Body of pancreas (tissue), 4 donors: ENCODE measurements at regions of chr18 and their contacts with region 1.

Region 1: GRCh38 chr18:56575819-56576663 is 62.4 kb downstream of the TXNL1 start:
- DNase-seq: peak in 1 of 4 donors; percentile 40
- ATAC-seq: peak; percentile 76
- H3K4me3 ChIP-seq: no peak overlapping the region
- H3K27ac ChIP-seq: no peak overlapping the region
- H3K4me1 ChIP-seq: peaks cover 25% of the 10 kb centered on the region
- H3K27me3 ChIP-seq: no peaks in the 10 kb centered on the region
- CTCF ChIP-seq: peak; percentile 42 to 85 (median 79)
- POLR2A ChIP-seq: no peak

Region 2: GRCh38 chr18:55234366-55235093 is 1341.5 kb before region 1 on chr18:
- intact Hi-C with region 1: loop called (anchors 10 kb)
- DNase-seq: peak; percentile 81 to 88 (median 84)
- ATAC-seq: peak; percentile 86
- H3K4me3 ChIP-seq: no peak overlapping the region
- H3K27ac ChIP-seq: no peak overlapping the region
- H3K4me1 ChIP-seq: peaks cover 6% of the 10 kb centered on the region
- H3K27me3 ChIP-seq: no peaks in the 10 kb centered on the region
- CTCF ChIP-seq: peak; percentile 52 to 88 (median 82)
- POLR2A ChIP-seq: no peak

Region 3: GRCh38 chr18:55413474-55413873 is 1162.6 kb before region 1 on chr18:
- intact Hi-C with region 1: loop called (anchors 5 kb)
- DNase-seq: no peak
- ATAC-seq: no peak
- H3K4me3 ChIP-seq: no peak overlapping the region
- H3K27ac ChIP-seq: no peak overlapping the region
- H3K4me1 ChIP-seq: no peaks in the 10 kb centered on the region
- H3K27me3 ChIP-seq: no peaks in the 10 kb centered on the region
- CTCF ChIP-seq: no peak
- POLR2A ChIP-seq: no peak